Activated CD4-positive, alpha-beta T cell treated with anti-CD3 and anti-CD28 coated beads, Interleukin-2, amount 10 ng/mL, durations not matched to agents 24 days and 14 days (primary cell): ENCODE measurements at regions of chr11 and their contacts with region 1.

Region 1: GRCh38 chr11:68312117-68312779 is at the start of gene LRP5:
- DNase-seq: peak; percentile 73
- H3K4me3 Mint-ChIP-seq: peak within 1 kb of the TSS; percentile 93
- H3K27ac Mint-ChIP-seq: peak within 1 kb of the TSS; percentile 83
- H3K4me1 Mint-ChIP-seq: peaks cover 37% of the 10 kb centered on the region
- H3K27me3 Mint-ChIP-seq: peaks cover 2% of the 10 kb centered on the region
- total RNA-seq, gene LRP5: 23.8 and 33.8 TPM in 2 replicates

Region 2: DNA sequence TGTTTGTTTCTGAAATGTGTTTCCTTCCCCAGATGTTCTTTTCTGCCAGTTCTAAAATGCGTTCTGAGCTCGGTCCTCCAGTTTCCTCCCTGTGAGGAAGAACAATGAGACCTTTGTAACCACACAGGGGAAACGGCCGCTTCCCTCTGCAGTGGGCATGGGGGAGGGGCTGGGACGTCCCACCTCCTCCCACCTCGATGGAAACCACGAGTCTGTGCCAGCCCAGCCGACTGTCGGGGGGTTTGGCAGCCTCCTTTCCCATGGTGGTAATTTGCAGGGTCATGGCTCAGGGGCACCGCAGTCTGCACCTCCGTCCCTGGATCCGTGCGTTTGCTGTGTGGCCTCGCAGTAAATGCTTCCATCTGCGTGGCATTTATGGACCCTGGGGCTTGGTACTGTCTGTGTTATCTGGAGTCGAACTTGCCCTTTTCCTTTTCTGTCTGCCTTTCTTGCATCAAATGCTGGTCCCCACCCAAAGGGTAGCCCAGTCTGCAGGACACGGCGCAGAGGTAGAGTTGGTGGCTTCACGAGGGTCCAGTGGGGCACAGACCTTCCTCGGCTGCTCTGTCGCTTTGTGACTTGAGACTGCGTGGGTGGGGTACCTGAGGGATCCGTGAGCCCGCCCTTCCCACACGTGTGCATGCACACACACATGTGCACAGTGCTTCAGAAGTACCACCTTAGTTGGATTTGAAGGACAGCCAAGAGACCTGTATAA is 16.3 kb after region 1 on chr11:
- intact Hi-C with region 1: no loop called
- DNase-seq: peak; percentile 64
- H3K4me3 Mint-ChIP-seq: no peak overlapping the region
- H3K27ac Mint-ChIP-seq: no peak overlapping the region
- H3K4me1 Mint-ChIP-seq: peaks cover 47% of the 10 kb centered on the region
- H3K27me3 Mint-ChIP-seq: no peaks in the 10 kb centered on the region

Region 3: GRCh38 chr11:68340784-68341544 is 28.7 kb after region 1 on chr11:
- intact Hi-C with region 1: loop called (anchors 1 kb)
- DNase-seq: peak; percentile 72
- H3K4me3 Mint-ChIP-seq: peak overlapping the region; percentile 26
- H3K27ac Mint-ChIP-seq: peak overlapping the region; percentile 54
- H3K4me1 Mint-ChIP-seq: peaks cover 45% of the 10 kb centered on the region
- H3K27me3 Mint-ChIP-seq: no peaks in the 10 kb centered on the region

Region 4: DNA sequence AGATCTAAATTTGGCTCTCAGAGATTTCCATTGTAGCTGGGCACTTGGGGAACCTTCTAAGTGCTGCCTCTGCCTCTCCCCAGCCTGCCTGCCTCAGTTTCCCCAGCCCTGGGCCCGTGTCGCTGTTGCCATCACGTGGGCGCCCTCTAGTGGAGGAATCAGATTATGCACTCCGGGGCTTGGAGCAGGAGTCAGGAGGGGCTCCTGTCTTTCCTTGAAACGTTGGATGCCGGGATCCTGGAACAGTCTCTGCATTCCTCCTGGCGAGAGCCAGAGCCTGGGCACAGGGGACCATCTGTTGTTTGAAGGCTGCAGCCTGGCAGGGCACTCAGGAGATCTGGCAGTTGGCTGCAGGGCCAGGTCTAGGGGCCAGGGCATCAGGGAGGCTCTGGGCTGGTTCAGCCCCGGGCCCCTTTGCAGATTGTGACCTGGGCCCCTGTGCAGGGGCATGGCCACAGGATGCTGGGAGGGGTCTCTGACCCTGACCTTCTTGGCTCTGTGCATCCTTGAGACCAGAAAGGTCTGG is 71.8 kb after region 1 on chr11:
- intact Hi-C with region 1: loop called (anchors 10 kb)
- DNase-seq: peak; percentile 91
- H3K4me3 Mint-ChIP-seq: no peak overlapping the region
- H3K27ac Mint-ChIP-seq: no peak overlapping the region
- H3K4me1 Mint-ChIP-seq: peaks cover 28% of the 10 kb centered on the region
- H3K27me3 Mint-ChIP-seq: no peaks in the 10 kb centered on the region